ENCODE measurements at regions of chr11 and their contacts with region 1.

Region 1: GRCh38 chr11:17276236-17277023 is at the start of gene NUCB2:
- DNase-seq: peak; percentile 97 to 98 (median 98)
- ATAC-seq: peak; percentile 97
- H3K4me3 ChIP-seq: peak within 1 kb of the TSS; percentile 47 to 92
- H3K27ac ChIP-seq: peak within 1 kb of the TSS; percentile 88 to 96 (median 90)
- H3K4me1 ChIP-seq: peaks cover 36% of the 10 kb centered on the region
- H3K27me3 ChIP-seq: no peaks in the 10 kb centered on the region
- CTCF ChIP-seq: no peak
- POLR2A ChIP-seq: peak; percentile 88 to 95 (median 89)
- total RNA-seq, gene NUCB2: 106 to 156 TPM

Region 2: DNA sequence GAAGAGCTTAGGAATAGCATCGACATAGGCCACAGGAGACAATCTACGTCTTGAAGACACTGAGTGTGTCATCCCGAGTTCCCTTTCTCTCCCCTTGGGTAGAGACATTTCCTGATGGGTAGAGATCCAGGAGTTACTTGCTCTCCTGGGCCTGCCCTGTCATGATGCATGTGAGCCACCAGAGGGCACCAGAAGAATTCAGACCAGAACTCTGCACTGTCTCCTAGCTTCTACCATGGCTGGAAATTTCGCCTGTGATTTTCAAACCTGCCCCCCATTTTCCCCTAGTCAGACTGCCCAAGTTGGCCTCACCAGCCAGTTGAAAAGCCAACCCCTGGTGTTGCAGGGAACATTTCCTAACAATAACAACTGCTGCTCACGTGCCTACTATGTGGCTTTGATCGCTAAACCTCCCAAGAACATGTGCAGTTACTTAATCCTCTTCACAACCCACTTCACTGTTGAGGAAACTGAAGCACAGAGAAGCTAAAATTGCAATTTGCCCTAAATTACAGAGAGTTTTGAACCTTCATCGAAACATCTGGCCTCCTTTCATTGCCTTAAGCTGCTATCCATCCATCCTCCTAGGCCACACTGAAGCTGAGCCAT is 490.8 kb before region 1 on chr11:
- intact Hi-C with region 1: no loop called
- DNase-seq: peak; percentile 68 to 74 (median 72)
- ATAC-seq: peak; percentile 72
- H3K4me3 ChIP-seq: no peak overlapping the region
- H3K27ac ChIP-seq: no peak overlapping the region
- H3K4me1 ChIP-seq: peaks cover 9% of the 10 kb centered on the region
- H3K27me3 ChIP-seq: no peaks in the 10 kb centered on the region
- CTCF ChIP-seq: peak; percentile 52 to 80 (median 75)
- POLR2A ChIP-seq: no peak

Region 3: GRCh38 chr11:17219016-17219415 is 57.4 kb before region 1 on chr11:
- intact Hi-C with region 1: loop called (anchors 10 kb)
- DNase-seq: no peak
- ATAC-seq: no peak
- H3K4me3 ChIP-seq: no peak overlapping the region
- H3K27ac ChIP-seq: no peak overlapping the region
- H3K4me1 ChIP-seq: no peaks in the 10 kb centered on the region
- H3K27me3 ChIP-seq: no peaks in the 10 kb centered on the region
- CTCF ChIP-seq: no peak
- POLR2A ChIP-seq: no peak